ENCODE measurements at regions of chr5 and their contacts with region 1.

Region 1: DNA sequence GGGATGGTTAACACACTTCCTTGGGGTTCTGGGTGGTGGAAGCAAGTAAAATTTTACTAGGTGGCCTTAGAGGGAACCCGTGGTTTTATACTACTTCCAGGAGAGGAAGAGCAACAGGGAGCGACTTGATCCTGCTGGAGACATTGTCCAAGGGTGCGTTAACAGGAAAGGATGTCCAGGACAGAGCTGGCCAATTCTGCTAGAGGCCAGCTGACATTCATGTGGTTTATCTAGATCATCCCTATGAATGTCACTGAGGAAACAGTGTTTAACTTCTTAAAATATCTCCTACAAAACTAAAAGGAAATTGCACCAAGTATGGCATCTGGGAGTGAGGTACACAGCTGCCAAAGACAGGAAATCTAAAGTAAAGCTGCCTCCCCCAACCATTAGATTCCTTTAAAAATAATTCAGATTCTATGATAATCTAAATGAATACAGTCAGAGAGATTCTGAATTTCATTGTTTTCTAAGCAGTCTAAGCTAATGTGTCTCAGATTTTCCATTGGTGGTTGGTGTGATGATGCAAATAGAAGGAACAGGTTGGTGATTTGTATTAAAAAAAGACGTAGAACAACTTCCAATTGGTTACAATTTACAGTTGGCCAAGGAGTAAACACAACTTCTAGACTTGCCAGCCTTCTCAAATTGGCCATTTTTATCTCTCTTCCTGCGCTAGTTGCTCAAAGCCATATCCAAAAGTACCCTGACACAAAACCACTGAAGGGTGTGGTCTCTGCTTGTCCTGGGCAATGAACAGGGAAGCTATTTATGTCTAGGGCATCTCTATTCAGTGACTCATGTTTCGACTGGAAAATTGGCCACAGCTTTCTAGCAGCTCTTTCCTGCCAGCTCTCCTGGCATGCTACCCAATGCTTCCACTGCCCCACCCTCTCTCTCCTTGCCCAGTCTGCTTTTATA is 574.7 kb upstream of the MEF2C start:
- DNase-seq: peak; percentile 70 to 83
- ATAC-seq: peak; percentile 99
- H3K4me3 ChIP-seq: peak overlapping the region in 3 of 4 donors; percentile 14 to 21 (median 19)
- H3K27ac ChIP-seq: peak overlapping the region; percentile 85 to 92 (median 89)
- H3K4me1 ChIP-seq: peaks cover 20 to 21% of the 10 kb centered on the region in 2 donors
- H3K27me3 ChIP-seq: no peaks in the 10 kb centered on the region
- CTCF ChIP-seq: no peak
- POLR2A ChIP-seq: no peak

Region 2: DNA sequence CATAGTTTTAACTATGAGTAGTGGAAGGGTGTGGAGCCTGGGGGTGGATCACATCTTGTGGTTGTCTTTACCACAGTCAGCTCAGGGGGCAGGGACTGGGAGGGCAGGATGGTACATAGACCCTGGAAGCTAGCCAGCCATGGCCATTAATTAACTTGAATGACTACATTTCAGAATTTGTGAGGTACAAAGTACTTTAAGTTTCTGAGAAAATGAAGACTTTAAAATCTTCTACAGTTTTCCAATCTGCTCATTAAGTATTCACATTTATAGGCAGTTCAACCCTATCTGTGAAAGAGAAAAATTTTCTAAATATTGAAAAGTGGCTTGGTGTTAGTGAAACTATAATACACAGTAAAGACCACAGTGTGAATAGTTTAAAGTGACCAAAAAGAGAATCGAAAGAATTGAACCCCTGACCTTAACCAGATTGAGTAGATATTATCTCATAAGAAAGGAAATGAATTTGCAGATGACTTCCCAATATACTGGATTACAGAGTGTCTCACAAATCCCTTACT is 340.5 kb before region 1 on chr5:
- in situ Hi-C with region 1: no loop called
- intact Hi-C with region 1: no loop called
- DNase-seq: no peak
- ATAC-seq: no peak
- H3K4me3 ChIP-seq: no peak overlapping the region
- H3K27ac ChIP-seq: no peak overlapping the region
- H3K4me1 ChIP-seq: peaks cover 5 to 7% of the 10 kb centered on the region in 2 donors
- H3K27me3 ChIP-seq: no peaks in the 10 kb centered on the region
- CTCF ChIP-seq: no peak
- POLR2A ChIP-seq: no peak

Region 3: GRCh38 chr5:89282554-89283510 is 174.8 kb before region 1 on chr5:
- in situ Hi-C with region 1: no loop called
- intact Hi-C with region 1: loop called (anchors 5 kb)
- DNase-seq: no peak
- ATAC-seq: peak; percentile 88 to 90
- H3K4me3 ChIP-seq: no peak overlapping the region
- H3K27ac ChIP-seq: peak overlapping the region in 3 of 4 donors; percentile 58 to 78 (median 67)
- H3K4me1 ChIP-seq: peaks cover 29 to 34% of the 10 kb centered on the region in 2 donors
- H3K27me3 ChIP-seq: no peaks in the 10 kb centered on the region
- CTCF ChIP-seq: no peak
- POLR2A ChIP-seq: no peak

Region 4: DNA sequence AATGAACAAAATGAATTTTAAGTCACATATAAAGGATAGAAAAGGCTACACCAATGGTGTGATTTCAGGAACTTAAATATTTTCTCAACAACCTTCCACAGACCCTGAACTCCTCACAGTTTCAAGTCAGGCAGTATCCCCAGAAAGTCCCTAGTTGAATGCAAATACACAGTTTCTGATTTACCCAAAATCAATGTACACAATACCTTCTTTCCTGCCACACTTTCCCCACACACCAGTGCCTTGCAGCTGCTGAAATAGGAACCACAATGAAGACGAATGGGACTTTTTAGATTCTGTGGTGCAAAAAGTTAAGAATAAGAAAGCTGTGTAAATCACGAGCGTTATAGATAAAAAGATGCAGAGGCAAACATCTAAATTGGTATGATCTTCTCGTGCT is 22.3 kb before region 1 on chr5:
- in situ Hi-C with region 1: no loop called
- intact Hi-C with region 1: loop called (anchors 2 kb)
- DNase-seq: no peak
- ATAC-seq: no peak
- H3K4me3 ChIP-seq: no peak overlapping the region
- H3K27ac ChIP-seq: no peak overlapping the region
- H3K4me1 ChIP-seq: peaks cover 20 to 33% of the 10 kb centered on the region in 2 donors
- H3K27me3 ChIP-seq: no peaks in the 10 kb centered on the region
- CTCF ChIP-seq: no peak
- POLR2A ChIP-seq: no peak